Posterior vena cava (tissue), 2 donors: ENCODE measurements at regions of chr1 and their contacts with region 1.

Region 1: GRCh38 chr1:2314803-2315673 is 76.3 kb downstream of the MORN1 start:
- DNase-seq: no peak

Region 2: GRCh38 chr1:2205191-2205952 is 109.7 kb before region 1 on chr1:
- intact Hi-C with region 1: loop called in 1 of 2 experiments (anchors 5 kb)
- DNase-seq: peak; percentile 99

Region 3: GRCh38 chr1:2259668-2260402 is 55.2 kb before region 1 on chr1:
- intact Hi-C with region 1: no loop called
- DNase-seq: no peak

Region 4: DNA sequence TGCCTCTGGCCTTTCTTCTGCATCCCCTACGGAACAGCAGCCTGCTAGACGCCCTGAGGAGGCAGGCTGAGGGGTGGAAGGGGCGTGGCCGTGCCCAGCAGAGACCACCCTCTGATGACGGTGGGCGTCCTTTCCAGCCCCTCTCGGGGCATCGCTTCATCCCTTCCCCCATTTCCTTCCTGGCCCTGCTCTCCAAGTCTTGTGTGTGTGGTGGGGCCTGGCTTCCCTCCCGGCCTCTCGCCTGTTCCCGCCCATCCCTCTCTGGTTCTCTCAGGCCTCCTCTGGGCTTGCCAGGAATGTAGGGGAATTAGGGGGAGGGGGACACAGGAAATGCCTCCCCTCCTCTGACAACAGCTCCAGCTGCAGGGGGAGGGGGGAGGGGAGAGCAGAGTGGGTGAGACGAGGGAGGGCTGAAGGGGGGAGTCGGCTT is 35.8 kb before region 1 on chr1:
- intact Hi-C with region 1: loop called in 1 of 2 experiments (anchors 5 kb)
- DNase-seq: peak; percentile 88

Region 5: GRCh38 chr1:2290595-2291510 is 24.2 kb before region 1 on chr1:
- intact Hi-C with region 1: no loop called
- DNase-seq: peak; percentile 97

Region 6: DNA sequence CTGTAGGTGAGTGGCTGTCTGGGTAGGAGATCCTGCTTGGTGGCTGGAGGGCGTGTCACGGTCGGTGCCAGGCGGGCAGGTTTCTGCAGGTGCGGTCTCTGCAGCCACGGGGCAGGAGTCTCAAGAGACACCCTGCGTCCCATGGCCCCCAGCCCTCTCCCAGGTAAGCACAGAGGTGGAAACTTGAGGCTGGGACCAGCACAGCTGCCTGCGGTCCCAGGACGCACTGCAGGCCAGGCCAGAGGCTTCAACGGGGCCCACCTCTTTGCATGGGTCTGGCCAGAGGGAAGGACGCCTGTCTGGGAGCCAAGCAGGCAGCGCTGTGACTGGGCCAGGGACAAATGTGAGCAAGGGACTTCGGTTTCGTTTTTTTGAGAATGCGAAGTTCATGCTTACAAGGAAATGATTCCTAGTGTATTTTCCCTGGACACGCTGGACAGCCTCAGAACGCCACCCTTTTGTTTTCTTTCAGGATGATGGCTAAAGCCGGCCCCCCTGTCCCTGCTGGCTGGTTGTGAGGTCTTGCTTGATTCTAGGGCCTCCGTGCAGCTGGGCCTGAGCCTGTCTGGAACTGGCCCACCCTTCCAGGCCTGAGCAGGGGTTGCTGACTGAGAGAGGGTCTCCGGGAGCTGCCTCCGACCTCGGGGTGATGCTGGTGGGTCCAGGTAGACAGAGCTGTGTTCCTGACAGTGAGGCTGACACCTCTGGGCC is 38.0 kb after region 1 on chr1:
- intact Hi-C with region 1: no loop called
- DNase-seq: peak; percentile 79

Region 7: DNA sequence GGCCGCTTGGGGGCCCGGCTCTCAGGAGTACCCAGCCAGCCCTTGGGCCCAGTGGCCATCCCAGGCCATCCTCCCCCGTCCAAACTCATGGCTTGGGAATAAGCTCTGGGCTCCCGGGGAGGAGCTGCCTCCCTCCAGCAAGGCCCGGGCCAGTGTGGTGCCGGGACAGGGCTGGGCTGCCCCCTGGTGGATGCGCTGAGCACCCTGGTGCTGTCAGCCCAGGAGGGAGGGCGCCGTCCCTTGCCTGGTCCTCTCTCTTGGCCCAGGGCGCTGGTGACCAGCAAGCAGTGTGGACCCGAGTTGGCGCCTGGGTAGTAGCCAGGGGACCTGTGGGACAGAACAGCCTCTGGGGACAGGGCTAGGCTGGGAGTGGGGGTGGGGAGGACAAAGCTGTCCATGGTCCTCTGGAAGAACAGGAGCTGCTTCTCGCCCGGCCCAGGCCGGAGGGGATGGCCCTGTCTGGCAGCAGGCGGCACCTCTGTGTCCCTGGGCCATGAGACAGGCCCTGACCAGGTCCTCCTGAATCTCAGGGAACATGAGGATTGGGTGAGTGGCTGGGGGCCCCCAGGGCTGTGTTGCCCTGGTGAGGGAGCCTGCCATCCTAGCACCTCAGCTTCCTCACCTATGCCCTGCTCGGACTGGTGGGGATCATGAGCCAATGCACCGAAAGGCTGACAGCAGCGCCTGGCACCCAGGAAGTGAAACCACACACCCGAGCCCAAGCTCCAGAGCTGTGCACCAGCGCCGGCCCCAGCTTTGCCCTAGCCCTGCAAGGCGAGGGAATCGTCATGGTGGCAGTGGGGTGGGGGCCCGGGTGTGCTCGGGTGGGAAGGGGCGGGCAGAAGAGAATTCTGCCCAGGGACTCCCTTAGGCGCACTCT is 66.9 kb after region 1 on chr1:
- intact Hi-C with region 1: loop called in 1 of 2 experiments (anchors 1 kb)
- DNase-seq: peak; percentile 95

Region 8: DNA sequence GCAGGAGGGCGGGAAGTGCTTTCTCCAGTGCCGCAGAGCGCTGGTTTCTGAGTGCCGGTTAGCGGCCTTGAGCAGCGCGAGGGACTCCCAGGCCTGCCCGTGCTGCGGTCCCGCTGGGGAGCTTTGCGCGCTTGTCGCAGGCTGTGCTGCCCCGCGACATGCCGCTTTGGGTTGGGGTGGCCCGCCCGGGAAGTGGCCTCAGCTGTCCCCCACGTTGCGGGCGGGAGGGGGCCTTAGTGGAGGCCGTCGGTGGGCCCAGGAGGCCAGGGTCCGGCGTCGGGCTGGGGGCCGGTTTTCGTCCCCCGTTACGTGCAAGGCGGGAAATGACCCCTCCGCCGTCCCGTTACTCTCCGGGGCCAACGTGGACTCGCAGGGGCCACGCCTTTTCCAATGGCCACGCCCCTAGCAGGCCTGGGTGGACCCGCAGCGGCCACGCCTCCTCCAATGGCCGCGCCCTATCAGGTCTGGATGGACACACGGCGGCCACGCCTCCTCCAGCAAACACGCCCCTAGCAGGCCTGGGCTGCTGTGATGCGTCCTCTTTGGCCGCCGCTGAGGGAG is 1586.0 kb after region 1 on chr1:
- intact Hi-C with region 1: no loop called
- DNase-seq: peak; percentile 99